Pancreas (tissue), 10 donors: ENCODE measurements at regions of chr11 and their contacts with region 1.

Region 1: DNA sequence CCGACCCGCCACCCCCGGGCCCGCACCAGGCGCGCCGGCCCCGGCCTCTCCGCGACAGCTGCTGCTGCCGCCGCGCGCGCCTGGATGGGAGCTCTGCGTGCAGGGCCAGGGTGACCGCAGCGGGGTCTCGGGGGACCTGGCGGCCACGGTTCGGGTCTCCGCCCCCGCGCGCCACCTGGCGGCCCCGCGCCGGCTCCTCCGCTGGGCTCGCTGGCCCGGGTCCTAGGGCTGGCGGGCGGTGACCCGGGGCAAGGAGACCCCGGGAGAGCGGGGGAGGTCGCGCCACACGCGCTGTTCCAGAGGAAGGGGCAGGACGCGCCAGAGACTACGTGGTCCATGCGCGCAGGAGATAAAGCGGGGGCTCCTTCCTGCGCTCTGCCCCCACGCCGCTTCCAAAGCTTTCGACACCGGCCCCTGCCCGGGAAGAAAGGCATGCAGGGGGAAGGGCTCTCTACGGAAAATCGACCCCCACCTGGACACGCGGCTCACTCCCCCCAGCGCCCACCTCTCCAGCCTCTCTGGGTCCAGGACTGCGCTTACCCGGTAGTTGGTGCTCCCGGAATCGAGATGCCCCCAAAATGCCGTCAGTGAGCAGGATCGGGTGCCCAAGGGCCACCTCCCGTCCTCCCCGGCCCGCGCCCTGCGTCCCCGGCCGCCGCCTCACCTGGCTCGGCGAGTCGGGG is 475 bp downstream of the SHANK2 start:
- DNase-seq: peak; percentile 45 to 87 (median 72)
- ATAC-seq: peak; percentile 44 to 60 (median 54)
- H3K4me3 ChIP-seq: peak overlapping the region; percentile 62 to 82 (median 68)
- H3K27ac ChIP-seq: peak overlapping the region; percentile 80 to 93 (median 88)
- H3K4me1 ChIP-seq: peaks cover 17 to 20% (median 18%) of the 10 kb centered on the region in 3 donors
- H3K27me3 ChIP-seq: no peaks in the 10 kb centered on the region
- CTCF ChIP-seq: peak; percentile 35 to 41 (median 40)

Region 2: GRCh38 chr11:71342951-71343827 is 91.3 kb after region 1 on chr11:
- intact Hi-C with region 1: loop called in 1 of 3 experiments (anchors 10 kb)
- DNase-seq: peak; percentile 62 to 84 (median 76)
- ATAC-seq: peak; percentile 85 to 98 (median 92)
- H3K4me3 ChIP-seq: no peak overlapping the region
- H3K27ac ChIP-seq: no peak overlapping the region
- H3K4me1 ChIP-seq: no peaks in the 10 kb centered on the region
- H3K27me3 ChIP-seq: no peaks in the 10 kb centered on the region
- CTCF ChIP-seq: peak; percentile 54 to 63 (median 54)

Region 3: DNA sequence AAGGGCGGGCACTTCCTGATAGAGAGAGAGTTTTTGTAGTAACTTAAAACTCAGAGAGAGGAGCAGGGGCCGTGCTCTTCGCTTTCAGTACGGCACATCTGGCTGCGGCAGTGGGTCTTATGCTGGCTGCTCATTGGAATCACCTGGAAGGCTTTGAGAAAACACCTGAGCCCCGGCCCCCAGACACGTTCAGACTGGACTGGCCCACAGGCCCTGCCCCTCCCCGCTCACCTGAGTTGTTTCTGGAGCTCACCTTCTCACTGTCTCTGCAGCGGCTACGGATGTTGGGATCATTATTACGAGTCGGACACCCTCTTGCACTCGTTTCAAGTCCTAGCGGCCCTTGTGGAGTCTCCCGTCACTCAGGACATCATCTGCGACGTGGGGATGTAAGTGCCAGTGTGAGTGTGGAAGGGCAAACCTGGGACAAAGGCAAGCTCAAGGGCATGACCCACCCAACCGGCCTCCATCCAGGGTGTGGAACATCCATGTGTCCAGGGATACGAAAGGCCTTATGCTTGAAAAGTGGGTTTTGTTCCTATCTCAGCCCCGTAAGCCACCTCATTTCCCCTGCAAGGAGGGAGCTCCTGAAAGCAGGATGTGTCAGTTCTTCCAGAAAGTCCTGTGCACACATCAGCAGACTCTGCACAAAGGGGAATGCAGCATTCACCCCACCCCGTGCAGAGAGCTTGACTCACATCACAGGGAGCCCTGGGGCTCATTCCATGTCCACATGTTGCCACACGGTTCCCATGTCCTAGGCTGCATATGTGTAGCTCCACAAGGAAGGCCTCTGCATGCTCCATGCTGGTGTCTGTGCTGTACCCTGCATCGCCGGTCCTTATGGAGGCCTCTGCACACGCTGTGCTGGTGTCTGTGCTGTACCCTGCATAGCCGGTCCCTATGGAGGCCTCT is 206.5 kb after region 1 on chr11:
- intact Hi-C with region 1: no loop called
- DNase-seq: peak in 1 of 6 donors; percentile 33
- ATAC-seq: no peak
- H3K4me3 ChIP-seq: no peak overlapping the region
- H3K27ac ChIP-seq: no peak overlapping the region
- H3K4me1 ChIP-seq: peaks cover 0 to 10% (median 0%) of the 10 kb centered on the region in 3 donors
- H3K27me3 ChIP-seq: no peaks in the 10 kb centered on the region
- CTCF ChIP-seq: no peak